ENCODE measurements at regions of chr1 and their contacts with region 1.

Region 1: GRCh38 chr1:8671306-8671917 is 146.0 kb downstream of the RERE start:
- DNase-seq: no peak
- ATAC-seq: peak; percentile 88
- H3K4me3 ChIP-seq: no peak overlapping the region
- H3K27ac ChIP-seq: no peak overlapping the region
- H3K4me1 ChIP-seq: peaks cover 7 to 15% of the 10 kb centered on the region in 2 donors
- H3K27me3 ChIP-seq: no peaks in the 10 kb centered on the region

Region 2: DNA sequence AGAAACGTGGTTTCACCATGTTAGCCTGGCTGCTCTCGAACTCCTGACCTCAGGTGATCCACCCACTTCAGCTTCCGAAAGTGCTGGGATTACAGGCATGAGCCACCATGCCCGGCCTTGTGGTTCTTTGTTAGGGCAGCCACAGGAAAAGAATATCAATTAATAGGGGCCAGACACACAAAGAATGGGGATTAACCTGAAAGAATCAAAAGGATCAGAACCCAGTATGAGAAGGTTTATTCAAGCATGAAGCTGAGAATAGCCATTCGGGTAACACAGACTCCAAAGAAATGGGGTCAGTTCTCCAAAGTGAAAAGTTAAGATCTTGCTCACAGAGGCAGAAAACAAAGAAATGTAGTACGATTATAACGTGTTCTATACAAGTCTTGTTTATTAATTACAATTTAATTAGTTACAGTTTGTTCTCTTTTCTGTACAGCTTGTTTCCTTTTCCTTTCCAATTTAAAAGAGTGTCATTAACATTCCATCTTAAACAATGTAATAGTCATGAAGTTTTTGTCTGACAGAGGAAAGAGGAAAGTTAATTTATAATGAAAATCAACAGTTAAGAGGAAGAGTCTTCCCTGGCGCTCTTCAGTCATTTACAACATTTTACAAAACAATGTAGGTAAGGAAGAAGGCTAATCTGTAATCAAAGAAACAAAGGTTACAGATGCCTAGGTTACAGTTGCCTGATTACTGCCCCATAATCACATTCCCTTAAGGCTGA is 404.8 kb before region 1 on chr1:
- intact Hi-C with region 1: no loop called
- DNase-seq: no peak
- ATAC-seq: no peak
- H3K4me3 ChIP-seq: no peak overlapping the region
- H3K27ac ChIP-seq: no peak overlapping the region
- H3K4me1 ChIP-seq: no peaks in the 10 kb centered on the region
- H3K27me3 ChIP-seq: no peaks in the 10 kb centered on the region

Region 3: DNA sequence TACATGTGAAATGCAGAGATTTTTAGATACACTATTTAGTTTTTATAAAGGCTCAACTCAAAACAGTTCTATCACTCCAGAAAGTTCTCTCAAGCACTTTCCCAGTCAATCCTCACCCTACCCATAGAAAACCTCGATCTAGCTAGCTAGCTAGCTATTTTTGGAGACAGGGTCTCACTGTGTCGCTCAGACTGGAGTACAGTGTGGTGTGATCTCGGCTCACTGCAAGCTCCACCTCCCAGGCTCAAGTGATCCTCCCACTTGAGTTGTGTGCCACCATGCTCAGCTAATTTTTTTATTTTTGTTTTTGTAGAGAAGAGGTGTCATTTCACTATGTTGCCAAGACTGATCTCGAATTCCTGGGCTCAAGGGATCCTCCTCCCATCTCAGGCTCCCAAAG is 90.8 kb before region 1 on chr1:
- intact Hi-C with region 1: no loop called
- DNase-seq: no peak
- ATAC-seq: no peak
- H3K4me3 ChIP-seq: no peak overlapping the region
- H3K27ac ChIP-seq: no peak overlapping the region
- H3K4me1 ChIP-seq: peaks cover 0 to 4% of the 10 kb centered on the region in 2 donors
- H3K27me3 ChIP-seq: no peaks in the 10 kb centered on the region

Region 4: DNA sequence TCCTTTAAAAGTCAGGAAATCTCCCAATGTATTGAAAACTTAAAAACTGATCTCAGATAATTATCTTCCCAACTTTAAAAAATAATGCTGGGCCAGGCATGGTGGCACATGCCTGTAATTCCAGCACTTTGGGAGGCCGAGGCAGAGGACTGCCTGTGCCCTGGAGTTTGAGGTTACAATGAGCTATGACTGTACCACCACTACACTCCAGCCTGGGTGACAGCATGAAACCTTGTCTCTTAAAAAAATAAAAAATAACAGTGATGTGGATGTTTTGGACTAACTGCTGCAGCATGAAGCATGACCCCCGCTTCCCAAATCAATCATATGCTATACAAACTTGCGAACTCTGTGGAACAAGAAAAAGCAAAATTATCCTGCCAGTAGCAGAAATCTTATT is 40.2 kb before region 1 on chr1:
- intact Hi-C with region 1: no loop called
- DNase-seq: no peak
- ATAC-seq: no peak
- H3K4me3 ChIP-seq: no peak overlapping the region
- H3K27ac ChIP-seq: no peak overlapping the region
- H3K4me1 ChIP-seq: peaks cover 0 to 3% of the 10 kb centered on the region in 2 donors
- H3K27me3 ChIP-seq: no peaks in the 10 kb centered on the region

Region 5: DNA sequence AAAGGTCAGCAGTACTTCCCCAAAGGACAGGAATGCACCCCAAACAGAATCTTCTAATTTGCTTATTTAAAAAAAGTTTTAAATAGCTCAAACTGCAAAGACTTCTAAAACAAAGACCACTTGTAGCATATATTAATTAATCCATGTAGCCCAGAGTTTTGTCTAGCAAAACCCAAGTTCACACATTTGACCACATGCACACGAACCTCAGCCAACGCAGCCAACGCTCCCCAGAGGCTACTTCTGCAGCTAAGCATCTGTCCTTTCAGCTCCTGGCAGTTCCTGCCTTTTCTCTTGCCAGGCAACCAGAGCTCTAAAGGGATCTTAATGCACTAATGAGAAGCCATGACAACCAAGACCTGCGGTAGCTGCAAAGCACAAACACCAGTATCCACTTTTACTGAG is 56.4 kb after region 1 on chr1:
- intact Hi-C with region 1: loop called in 1 of 2 experiments (anchors 10 kb)
- DNase-seq: no peak
- ATAC-seq: no peak
- H3K4me3 ChIP-seq: no peak overlapping the region
- H3K27ac ChIP-seq: no peak overlapping the region
- H3K4me1 ChIP-seq: no peaks in the 10 kb centered on the region
- H3K27me3 ChIP-seq: no peaks in the 10 kb centered on the region